ENCODE measurements at regions of chr19 and their contacts with region 1.

Region 1: GRCh38 chr19:39833464-39834286 is at the start of gene DYRK1B:
- DNase-seq: peak; percentile 92
- ATAC-seq: peak; percentile 98
- H3K4me3 ChIP-seq: peak within 1 kb of the TSS; percentile 97
- H3K27ac ChIP-seq: peak within 1 kb of the TSS; percentile 51
- H3K4me1 ChIP-seq: peaks cover 15% of the 10 kb centered on the region
- H3K27me3 ChIP-seq: no peaks in the 10 kb centered on the region
- CTCF ChIP-seq: no peak
- EP300 ChIP-seq: peak in 1 of 2 experiments; percentile 70; a peak in 2 of 4 replicates
- POLR2A ChIP-seq: peak; percentile 69
- RAD21 ChIP-seq: no peak
- polyA plus RNA-seq, gene DYRK1B: 0.07 TPM in 1 of 2 experiments, not detected in the other

Region 2: GRCh38 chr19:39708628-39709351 is 124.9 kb before region 1 on chr19:
- CTCF ChIA-PET with region 1: no interaction called
- POLR2A ChIA-PET with region 1: no interaction called
- RAD21 ChIA-PET with region 1: no interaction called
- SMC1A ChIA-PET with region 1: no interaction called
- in situ Hi-C with region 1: no loop called
- intact Hi-C with region 1: no loop called
- DNase-seq: no peak
- ATAC-seq: peak; percentile 85
- H3K4me3 ChIP-seq: no peak overlapping the region
- H3K27ac ChIP-seq: peak overlapping the region; percentile 68
- H3K4me1 ChIP-seq: peaks cover 55% of the 10 kb centered on the region
- H3K27me3 ChIP-seq: no peaks in the 10 kb centered on the region
- CTCF ChIP-seq: no peak
- EP300 ChIP-seq: peak; percentile 19 to 53; a peak in 1 of 4 replicates
- POLR2A ChIP-seq: no peak
- RAD21 ChIP-seq: no peak

Region 3: GRCh38 chr19:39805104-39805503 is 28.6 kb before region 1 on chr19:
- CTCF ChIA-PET with region 1: no interaction called
- POLR2A ChIA-PET with region 1: interaction called, 10 read pairs
- RAD21 ChIA-PET with region 1: interaction called, 5 read pairs
- SMC1A ChIA-PET with region 1: interaction called, 3 read pairs
- in situ Hi-C with region 1: no loop called
- intact Hi-C with region 1: no loop called
- DNase-seq: no peak
- ATAC-seq: no peak
- H3K4me3 ChIP-seq: no peak overlapping the region
- H3K27ac ChIP-seq: no peak overlapping the region
- H3K4me1 ChIP-seq: no peaks in the 10 kb centered on the region
- H3K27me3 ChIP-seq: no peaks in the 10 kb centered on the region
- CTCF ChIP-seq: no peak
- EP300 ChIP-seq: no peak
- POLR2A ChIP-seq: no peak
- RAD21 ChIP-seq: no peak

Region 4: DNA sequence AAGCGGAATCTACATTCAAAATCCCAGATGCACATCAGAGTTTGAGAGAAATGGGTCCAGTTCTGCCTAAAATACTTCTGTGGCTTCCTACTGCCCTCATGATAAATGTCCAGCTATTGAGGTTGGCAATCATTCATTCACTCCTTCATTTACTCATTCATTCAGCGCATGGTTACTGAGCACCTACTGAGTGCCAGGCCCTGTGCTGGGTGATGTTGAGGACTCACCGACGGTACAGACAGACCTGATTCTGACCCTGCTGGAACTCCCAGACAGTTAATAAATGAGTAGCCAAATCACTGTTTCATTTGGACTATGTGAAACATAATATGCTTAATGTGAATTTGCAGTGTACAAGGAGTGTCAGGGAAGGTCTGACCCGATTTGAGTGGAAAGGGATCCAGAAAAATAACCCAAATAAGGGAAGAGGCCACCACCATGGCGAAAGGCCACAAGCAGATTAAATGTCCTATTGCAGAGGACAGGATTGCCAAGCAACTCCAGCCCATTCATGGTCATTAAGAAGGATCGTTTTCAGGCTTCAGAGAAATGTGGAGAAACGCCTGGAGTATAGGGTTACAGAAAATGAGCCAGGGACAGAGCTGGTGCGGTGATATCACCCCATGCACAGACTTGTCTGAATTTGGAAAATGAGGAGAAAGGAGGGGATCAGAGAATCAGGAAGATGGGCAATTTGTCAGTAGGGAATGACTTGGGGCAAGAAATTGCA is 20.2 kb before region 1 on chr19:
- CTCF ChIA-PET with region 1: interaction called, 13 read pairs
- POLR2A ChIA-PET with region 1: interaction called, 29 read pairs
- RAD21 ChIA-PET with region 1: interaction called, 20 read pairs
- SMC1A ChIA-PET with region 1: interaction called, 23 read pairs
- in situ Hi-C with region 1: no loop called
- intact Hi-C with region 1: no loop called
- DNase-seq: no peak
- ATAC-seq: no peak
- H3K4me3 ChIP-seq: no peak overlapping the region
- H3K27ac ChIP-seq: no peak overlapping the region
- H3K4me1 ChIP-seq: peaks cover 21% of the 10 kb centered on the region
- H3K27me3 ChIP-seq: no peaks in the 10 kb centered on the region
- CTCF ChIP-seq: no peak
- EP300 ChIP-seq: no peak
- POLR2A ChIP-seq: no peak
- RAD21 ChIP-seq: no peak

Region 5: GRCh38 chr19:39818626-39819097 is 15.0 kb before region 1 on chr19:
- CTCF ChIA-PET with region 1: interaction called, 13 read pairs
- POLR2A ChIA-PET with region 1: interaction called, 29 read pairs
- RAD21 ChIA-PET with region 1: interaction called, 20 read pairs
- SMC1A ChIA-PET with region 1: interaction called, 23 read pairs
- in situ Hi-C with region 1: no loop called
- intact Hi-C with region 1: no loop called
- DNase-seq: peak; percentile 77
- ATAC-seq: peak; percentile 96
- H3K4me3 ChIP-seq: no peak overlapping the region
- H3K27ac ChIP-seq: peak overlapping the region; percentile 47
- H3K4me1 ChIP-seq: peaks cover 36% of the 10 kb centered on the region
- H3K27me3 ChIP-seq: no peaks in the 10 kb centered on the region
- CTCF ChIP-seq: no peak
- EP300 ChIP-seq: peak; percentile 30 to 60; a peak in 2 of 4 replicates
- POLR2A ChIP-seq: peak; percentile 38; the same call in 1 of the 2 replicates
- RAD21 ChIP-seq: no peak

Region 6: DNA sequence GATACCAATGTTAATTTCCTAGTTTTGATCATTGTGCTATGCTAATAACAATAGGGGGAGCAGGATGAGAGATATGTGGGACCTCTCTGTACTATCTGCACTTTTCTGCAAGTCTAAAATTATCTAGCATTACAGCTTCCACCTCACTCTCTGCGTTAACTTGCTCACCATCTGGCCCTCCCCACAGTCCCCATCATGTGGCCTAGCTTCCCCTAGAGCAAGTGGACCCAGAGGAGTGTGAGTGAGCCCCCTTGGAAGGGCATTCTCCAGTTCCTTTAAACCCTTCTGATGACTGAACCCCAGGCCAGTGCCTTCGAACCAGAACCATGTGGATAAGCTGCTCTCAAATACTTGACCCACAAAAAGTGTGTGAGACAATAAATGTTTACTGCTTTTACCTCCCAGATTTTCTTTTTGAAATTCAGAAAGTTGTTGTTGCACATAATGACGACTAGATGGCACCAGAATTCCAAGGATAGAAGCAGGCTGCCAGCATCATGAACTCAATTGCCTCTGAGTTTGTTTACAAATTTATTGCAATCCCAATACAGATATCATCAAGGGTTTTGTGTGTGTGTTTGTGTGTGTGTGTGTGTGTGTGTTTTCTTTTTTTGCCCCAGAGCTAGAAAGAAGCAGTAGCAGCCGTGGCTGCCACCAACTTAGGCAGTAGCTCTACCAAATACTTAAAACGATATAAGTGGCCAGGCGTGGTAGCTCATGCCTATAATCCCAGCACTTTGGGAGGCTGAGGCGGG is 306.0 kb after region 1 on chr19:
- CTCF ChIA-PET with region 1: no interaction called
- POLR2A ChIA-PET with region 1: no interaction called
- RAD21 ChIA-PET with region 1: no interaction called
- SMC1A ChIA-PET with region 1: no interaction called
- in situ Hi-C with region 1: no loop called
- intact Hi-C with region 1: no loop called
- DNase-seq: no peak
- ATAC-seq: peak; percentile 44
- H3K4me3 ChIP-seq: no peak overlapping the region
- H3K27ac ChIP-seq: no peak overlapping the region
- H3K4me1 ChIP-seq: peaks cover 18% of the 10 kb centered on the region
- H3K27me3 ChIP-seq: no peaks in the 10 kb centered on the region
- CTCF ChIP-seq: peak; percentile 56 to 87 (median 74)
- EP300 ChIP-seq: no peak
- POLR2A ChIP-seq: no peak
- RAD21 ChIP-seq: peak; percentile 99